T-cell (primary cell): ENCODE measurements at regions of chr6 and their contacts with region 1.

Region 1: DNA sequence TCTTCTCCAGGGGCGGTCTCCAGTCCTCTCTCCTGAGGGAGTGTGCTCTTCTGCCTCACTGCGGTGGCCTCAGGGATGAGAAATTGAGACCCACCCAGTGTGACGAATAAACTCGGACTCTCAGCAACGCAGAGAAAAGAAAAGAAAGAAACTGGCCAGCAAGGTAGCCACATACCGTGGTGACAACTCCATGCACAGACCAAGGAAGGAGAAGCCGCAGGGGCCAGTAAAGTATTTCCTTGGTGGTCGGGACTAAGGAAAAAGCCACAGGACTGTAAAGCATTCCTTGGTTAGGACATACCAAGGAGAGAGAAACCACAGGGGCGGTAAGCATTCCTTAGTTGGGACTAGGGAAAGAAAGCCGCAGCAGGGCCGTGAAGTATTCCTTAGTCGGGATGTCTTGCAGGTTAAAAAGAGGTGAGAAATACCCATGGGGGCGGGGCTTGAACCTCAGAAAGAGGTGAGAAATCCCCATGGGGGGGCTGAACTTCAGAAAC is 13.6 kb upstream of the GOPC start:
- DNase-seq: peak in 1 of 35 experiments; percentile 2
- ATAC-seq: peak in 1 of 4 experiments; percentile 36
- H3K4me3 ChIP-seq: no peak overlapping the region
- H3K4me3 Mint-ChIP-seq: no peak overlapping the region
- H3K27ac ChIP-seq: peak overlapping the region; percentile 82
- H3K27ac Mint-ChIP-seq: peak overlapping the region in 1 of 2 donors; percentile 46
- H3K4me1 ChIP-seq: peaks cover 2 to 26% of the 10 kb centered on the region in 2 experiments
- H3K4me1 Mint-ChIP-seq: peaks cover 20 to 32% (median 26%) of the 10 kb centered on the region in 3 donors
- H3K27me3 ChIP-seq: no peaks in the 10 kb centered on the region
- H3K27me3 Mint-ChIP-seq: peaks cover 4 to 10% of the 10 kb centered on the region in 2 donors

Region 2: DNA sequence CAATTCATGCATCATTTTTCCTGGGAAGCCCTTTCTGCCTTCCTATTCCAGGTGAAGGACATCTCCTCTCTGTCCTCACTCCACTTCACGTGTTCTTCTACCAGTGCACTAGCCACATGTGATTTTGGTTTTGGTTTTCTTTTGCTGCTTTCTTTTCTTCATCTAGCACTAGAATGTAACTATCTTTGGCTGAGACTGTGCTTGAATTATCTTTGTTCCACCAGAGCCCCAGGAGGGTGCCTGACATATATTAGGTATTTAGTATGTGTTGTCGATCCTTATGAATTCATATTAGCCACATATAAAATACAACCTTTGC is 270.7 kb before region 1 on chr6:
- CTCF ChIA-PET with region 1: no interaction called
- POLR2A ChIA-PET with region 1: interaction called in 1 of 2 experiments, 10 read pairs
- DNase-seq: no peak
- ATAC-seq: no peak
- H3K4me3 ChIP-seq: no peak overlapping the region
- H3K4me3 Mint-ChIP-seq: no peak overlapping the region
- H3K27ac ChIP-seq: no peak overlapping the region
- H3K27ac Mint-ChIP-seq: no peak overlapping the region
- H3K4me1 ChIP-seq: no peaks in the 10 kb centered on the region
- H3K4me1 Mint-ChIP-seq: no peaks in the 10 kb centered on the region
- H3K27me3 ChIP-seq: peaks cover 0 to 2% of the 10 kb centered on the region in 2 experiments
- H3K27me3 Mint-ChIP-seq: peaks cover 10% of the 10 kb centered on the region in 2 donors